ENCODE measurements at regions of chr22 and their contacts with region 1.

Region 1: DNA sequence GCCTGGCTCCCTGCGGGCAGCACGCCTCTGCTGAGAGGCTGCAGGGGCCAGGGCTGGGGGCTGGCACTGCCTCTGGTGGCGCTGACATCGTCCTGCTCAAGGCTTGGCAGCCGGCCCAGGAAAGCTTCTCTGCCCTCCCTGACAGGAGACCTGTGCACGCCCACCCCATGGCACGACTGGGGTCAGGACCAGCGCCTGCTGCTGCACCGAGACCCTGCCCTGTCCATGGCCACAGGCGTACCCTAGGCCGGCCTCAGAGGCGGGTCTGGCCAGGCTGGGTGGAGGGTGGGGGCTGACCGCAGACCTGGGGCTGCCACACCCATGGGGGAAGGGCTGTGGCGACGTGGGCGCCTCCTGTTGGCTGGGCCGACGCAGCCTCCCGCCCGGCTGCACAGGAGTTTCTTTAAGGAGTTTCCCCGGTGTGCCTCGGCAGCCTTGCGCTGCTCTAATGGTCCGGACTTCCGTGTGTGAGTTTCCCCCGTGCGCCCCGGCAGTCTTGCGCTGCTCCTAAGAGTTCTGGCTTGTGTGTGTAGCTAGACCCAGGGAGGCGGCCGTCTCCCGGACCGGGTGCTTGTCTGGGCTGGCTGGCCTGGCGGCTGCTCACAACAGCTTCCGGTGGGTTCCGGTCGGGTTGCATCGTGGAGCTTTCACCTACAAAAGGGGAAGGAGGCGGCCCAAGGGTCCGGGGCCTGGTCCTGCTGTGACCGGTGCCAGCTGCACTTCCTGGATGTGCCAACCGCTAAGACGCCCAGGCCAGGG is 4.6 kb downstream of the TRABD start:
- DNase-seq: peak; percentile 84
- H3K4me3 Mint-ChIP-seq: peak overlapping the region; percentile 81
- H3K27ac Mint-ChIP-seq: peak overlapping the region; percentile 97
- H3K4me1 Mint-ChIP-seq: peaks cover 49% of the 10 kb centered on the region
- H3K27me3 Mint-ChIP-seq: no peaks in the 10 kb centered on the region

Region 2: GRCh38 chr22:50105208-50106100 is 84.9 kb before region 1 on chr22:
- CTCF ChIA-PET with region 1: no interaction called
- POLR2A ChIA-PET with region 1: interaction called, 12 read pairs
- DNase-seq: peak; percentile 45
- H3K4me3 Mint-ChIP-seq: peak overlapping the region; percentile 69
- H3K27ac Mint-ChIP-seq: peak overlapping the region; percentile 91
- H3K4me1 Mint-ChIP-seq: peaks cover 16% of the 10 kb centered on the region
- H3K27me3 Mint-ChIP-seq: peaks cover 4% of the 10 kb centered on the region

Measured in activated CD4-positive, alpha-beta T cell treated with anti-CD3 and anti-CD28 coated beads, Interleukin-2, amount 10 ng/mL, durations not matched to agents 7 days and 5 days (primary cell).